Activated CD4-positive, alpha-beta memory T cell treated with anti-CD3 and anti-CD28 coated beads, Interleukin-2, amount 10 ng/mL, durations not matched to agents 7 days and 5 days (primary cell): ENCODE measurements at regions of chr19 and their contacts with region 1.

Region 1: DNA sequence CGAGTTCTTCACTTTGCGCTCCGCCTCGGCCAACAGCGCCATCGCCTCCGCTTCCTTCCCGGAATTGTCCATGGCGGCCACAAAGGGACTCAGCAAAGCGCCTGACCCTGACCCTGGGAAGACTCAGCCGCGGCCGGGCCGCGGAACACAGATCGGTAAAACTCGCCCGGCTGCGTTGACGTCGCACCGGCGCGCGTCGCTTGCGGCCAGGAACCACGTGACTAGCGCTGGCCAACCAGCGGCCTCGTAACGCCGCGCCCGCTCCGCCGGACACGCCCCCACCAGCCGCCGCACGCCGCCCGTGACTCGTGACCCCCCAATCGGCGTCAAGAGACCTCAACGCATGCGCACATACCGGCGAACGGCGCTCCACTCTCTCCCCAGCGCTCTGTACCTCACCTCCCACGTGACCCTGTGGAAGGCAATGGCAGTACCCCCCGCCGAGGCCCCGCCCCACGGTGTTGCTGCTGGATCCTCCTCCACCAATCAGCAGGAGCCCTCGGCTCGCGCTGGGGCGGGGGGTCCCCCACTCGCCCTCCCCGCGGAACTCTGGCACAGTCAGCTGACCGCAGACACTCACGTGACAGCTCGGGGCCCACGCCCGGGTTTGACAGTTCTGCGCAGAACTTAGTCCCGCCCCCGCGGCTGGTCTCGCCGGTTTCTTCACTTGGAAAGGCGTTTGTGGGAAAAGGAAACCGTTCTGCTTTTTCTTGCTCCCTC is at the start of gene NAPA:
- DNase-seq: peak; percentile 100
- H3K4me3 Mint-ChIP-seq: peak within 1 kb of the TSS; percentile 98
- H3K27ac Mint-ChIP-seq: peak within 1 kb of the TSS; percentile 97
- H3K4me1 Mint-ChIP-seq: peaks cover 88% of the 10 kb centered on the region
- H3K27me3 Mint-ChIP-seq: no peaks in the 10 kb centered on the region
- total RNA-seq, gene NAPA: 117 to 119 TPM

Region 2: GRCh38 chr19:47600246-47601179 is 85.5 kb after region 1 on chr19:
- CTCF ChIA-PET with region 1: interaction called, 35 read pairs
- POLR2A ChIA-PET with region 1: interaction called, 87 read pairs
- DNase-seq: peak; percentile 100
- H3K4me3 Mint-ChIP-seq: peak overlapping the region; percentile 85
- H3K27ac Mint-ChIP-seq: peak overlapping the region; percentile 89
- H3K4me1 Mint-ChIP-seq: peaks cover 48% of the 10 kb centered on the region
- H3K27me3 Mint-ChIP-seq: peaks cover 5% of the 10 kb centered on the region

Region 3: GRCh38 chr19:47608074-47608918 is 93.3 kb after region 1 on chr19:
- CTCF ChIA-PET with region 1: interaction called, 13 read pairs
- POLR2A ChIA-PET with region 1: interaction called, 87 read pairs
- DNase-seq: peak; percentile 97
- H3K4me3 Mint-ChIP-seq: peak overlapping the region; percentile 75
- H3K27ac Mint-ChIP-seq: peak overlapping the region; percentile 78
- H3K4me1 Mint-ChIP-seq: peaks cover 33% of the 10 kb centered on the region
- H3K27me3 Mint-ChIP-seq: peaks cover 5% of the 10 kb centered on the region